GM13976 (cell line): ENCODE measurements at regions of chr18 and their contacts with region 1.

Region 1: DNA sequence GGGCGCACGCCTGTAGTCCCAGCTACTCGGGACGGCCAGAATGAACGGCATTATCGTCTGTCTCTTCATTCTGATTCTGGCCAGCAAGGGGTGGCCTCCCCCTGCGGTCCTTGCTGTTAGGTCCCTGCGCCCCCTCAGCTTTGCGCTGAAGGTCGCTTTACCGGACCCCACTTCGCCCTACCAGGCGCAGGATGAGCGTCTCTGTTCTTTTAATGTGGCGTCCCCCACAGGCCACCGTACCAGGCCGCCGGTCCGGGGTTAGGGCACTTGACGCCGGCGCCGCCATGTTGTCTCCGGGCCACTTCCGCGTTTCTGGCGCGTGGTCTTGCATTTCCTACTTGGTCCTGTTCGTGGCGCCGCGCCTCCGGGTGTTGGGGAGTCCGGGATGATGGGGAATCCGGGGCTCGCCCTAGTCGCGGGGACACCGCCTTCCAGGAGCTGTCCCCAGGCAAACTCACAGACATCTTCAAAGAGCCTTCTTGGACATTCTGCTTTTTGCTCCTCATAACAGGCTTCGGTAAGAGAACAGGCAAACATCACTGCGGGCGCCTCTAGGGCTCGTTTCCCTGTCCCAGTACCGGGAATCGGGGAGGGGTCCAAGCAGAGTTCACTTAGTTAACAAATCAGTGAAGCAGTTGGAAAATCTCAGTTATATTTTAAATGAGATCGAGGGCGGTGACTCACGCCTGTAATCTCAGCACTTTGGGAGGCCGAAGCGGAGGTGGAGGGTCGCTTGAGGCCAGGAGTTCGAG is 8.5 kb upstream of the NARS1 start:
- DNase-seq: peak; percentile 91
- CTCF ChIP-seq: peak; percentile 85

Region 2: DNA sequence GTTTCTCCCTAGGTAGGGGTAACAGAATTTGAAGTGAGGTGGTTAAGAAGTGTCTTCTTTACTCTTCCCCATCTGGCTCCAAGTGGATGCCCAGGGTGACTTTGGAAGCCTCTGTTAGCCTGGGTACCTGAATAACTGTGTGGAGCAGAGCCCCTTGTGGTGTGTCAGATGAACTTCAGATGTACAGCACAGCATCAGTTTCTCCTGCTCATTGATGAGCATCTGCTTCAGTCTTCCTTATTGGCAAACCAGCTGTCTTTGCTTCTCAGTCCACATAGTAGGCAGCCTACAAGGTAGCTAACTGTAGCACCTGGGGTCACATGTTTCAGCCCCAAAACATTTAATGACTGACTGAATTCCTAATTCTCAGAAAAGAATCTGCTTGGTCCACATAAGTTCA is 229.1 kb after region 1 on chr18:
- in situ Hi-C with region 1: loop called (anchors 25 kb)
- DNase-seq: peak; percentile 29
- CTCF ChIP-seq: peak; percentile 49

Region 3: GRCh38 chr18:58117786-58118403 is 487.7 kb after region 1 on chr18:
- in situ Hi-C with region 1: loop called (anchors 25 kb)
- DNase-seq: no peak
- CTCF ChIP-seq: no peak